A673 (cell line): ENCODE measurements at regions of chr13 and their contacts with region 1.

Region 1: GRCh38 chr13:26266311-26266710 is 12.4 kb downstream of the CDK8 start:
- DNase-seq: no peak
- H3K4me3 ChIP-seq: no peak overlapping the region
- H3K27ac ChIP-seq: no peak overlapping the region
- H3K4me1 ChIP-seq: no peaks in the 10 kb centered on the region
- H3K27me3 ChIP-seq: no peaks in the 10 kb centered on the region
- CTCF ChIP-seq: no peak

Region 2: GRCh38 chr13:26541041-26541440 is 274.7 kb after region 1 on chr13:
- CTCF ChIA-PET with region 1: no interaction called
- POLR2A ChIA-PET with region 1: interaction called, 12 read pairs
- intact Hi-C with region 1: no loop called
- DNase-seq: no peak
- H3K4me3 ChIP-seq: no peak overlapping the region
- H3K27ac ChIP-seq: no peak overlapping the region
- H3K4me1 ChIP-seq: peaks cover 9% of the 10 kb centered on the region
- H3K27me3 ChIP-seq: peaks cover 10% of the 10 kb centered on the region
- CTCF ChIP-seq: no peak